ENCODE measurements at regions of chr3 and their contacts with region 1.

Region 1: DNA sequence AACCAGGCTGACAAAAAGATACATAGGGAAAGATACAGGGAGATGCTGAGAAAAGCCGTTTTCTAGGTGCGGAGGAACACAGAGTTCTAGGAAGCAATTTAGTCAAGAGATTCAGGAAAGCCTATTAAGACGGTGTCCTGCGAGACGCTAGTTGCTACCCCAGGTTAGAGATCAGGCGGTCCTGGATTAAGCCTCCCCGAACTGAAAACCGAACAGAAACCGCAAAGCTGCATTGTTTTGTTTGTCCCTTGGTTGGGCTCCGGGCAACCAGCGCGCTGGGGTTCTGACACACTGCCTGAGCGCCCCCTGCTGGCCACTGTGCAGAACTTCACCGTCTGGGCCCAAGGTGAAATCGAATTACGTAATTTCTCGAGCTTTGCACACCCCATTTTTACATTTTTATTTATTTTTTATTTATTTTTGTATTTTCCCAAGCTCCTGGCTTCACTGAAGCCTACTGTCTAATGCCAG is 37.3 kb upstream of the NDUFB4 start:
- DNase-seq: peak; percentile 38
- H3K4me3 ChIP-seq: peak overlapping the region; percentile 55
- CTCF ChIP-seq: peak; percentile 88

Region 2: GRCh38 chr3:120410541-120410940 is 148.3 kb before region 1 on chr3:
- CTCF ChIA-PET with region 1: interaction called, 244 read pairs
- POLR2A ChIA-PET with region 1: no interaction called
- DNase-seq: no peak
- H3K4me3 ChIP-seq: no peak overlapping the region
- CTCF ChIP-seq: no peak

Region 3: DNA sequence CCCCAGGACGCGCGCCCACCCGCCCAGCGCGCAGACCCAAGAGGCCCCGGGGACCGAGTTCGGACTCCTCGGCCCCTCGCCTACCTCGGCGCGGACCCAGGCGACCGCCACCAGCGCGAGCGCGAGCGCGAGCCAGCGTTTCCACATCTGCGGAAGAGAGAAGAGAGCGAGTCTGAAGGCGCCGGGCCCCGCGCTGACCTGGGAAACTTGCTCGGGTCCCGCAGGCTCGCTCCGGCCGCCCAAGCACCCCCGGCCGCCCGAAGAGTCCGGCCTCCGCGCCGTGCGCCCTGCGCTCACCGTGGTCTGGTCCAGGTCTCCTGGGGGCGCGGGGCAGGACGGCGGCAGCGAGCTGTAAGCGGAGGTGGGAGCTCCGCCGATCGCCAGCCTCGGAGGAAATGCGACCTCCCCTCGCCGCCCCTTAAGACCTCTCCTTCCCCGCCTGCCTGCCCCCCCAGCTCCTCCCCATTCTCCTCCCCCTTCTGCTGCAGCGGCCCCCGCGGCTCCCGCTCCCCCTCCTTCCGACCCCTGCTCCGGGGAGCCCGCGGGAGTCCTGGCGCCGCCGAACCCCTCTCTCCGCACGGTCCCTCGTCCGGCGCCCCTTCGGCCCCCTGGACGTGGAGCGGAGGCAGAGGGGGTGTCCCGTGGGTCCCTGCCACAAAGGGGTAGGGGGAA is 108.1 kb before region 1 on chr3 and contains the start of gene FSTL1:
- CTCF ChIA-PET with region 1: interaction called, 108 read pairs
- POLR2A ChIA-PET with region 1: interaction called, 16 read pairs
- DNase-seq: no peak
- H3K4me3 ChIP-seq: peak within 1 kb of the TSS; percentile 89
- CTCF ChIP-seq: no peak

Region 4: GRCh38 chr3:120596116-120596852 is 37.5 kb after region 1 on chr3 and contains the start of gene NDUFB4:
- CTCF ChIA-PET with region 1: interaction called, 20 read pairs
- POLR2A ChIA-PET with region 1: no interaction called
- DNase-seq: peak; percentile 93
- H3K4me3 ChIP-seq: peak within 1 kb of the TSS; percentile 84
- CTCF ChIP-seq: no peak

Region 5: GRCh38 chr3:121153851-121154250 is 595.0 kb after region 1 on chr3:
- CTCF ChIA-PET with region 1: interaction called, 10 read pairs
- POLR2A ChIA-PET with region 1: no interaction called
- DNase-seq: no peak
- H3K4me3 ChIP-seq: no peak overlapping the region
- CTCF ChIP-seq: no peak